Activated CD4-positive, alpha-beta memory T cell treated with anti-CD3 and anti-CD28 coated beads for 36 hours (primary cell): ENCODE measurements at regions of chr14 and their contacts with region 1.

Region 1: DNA sequence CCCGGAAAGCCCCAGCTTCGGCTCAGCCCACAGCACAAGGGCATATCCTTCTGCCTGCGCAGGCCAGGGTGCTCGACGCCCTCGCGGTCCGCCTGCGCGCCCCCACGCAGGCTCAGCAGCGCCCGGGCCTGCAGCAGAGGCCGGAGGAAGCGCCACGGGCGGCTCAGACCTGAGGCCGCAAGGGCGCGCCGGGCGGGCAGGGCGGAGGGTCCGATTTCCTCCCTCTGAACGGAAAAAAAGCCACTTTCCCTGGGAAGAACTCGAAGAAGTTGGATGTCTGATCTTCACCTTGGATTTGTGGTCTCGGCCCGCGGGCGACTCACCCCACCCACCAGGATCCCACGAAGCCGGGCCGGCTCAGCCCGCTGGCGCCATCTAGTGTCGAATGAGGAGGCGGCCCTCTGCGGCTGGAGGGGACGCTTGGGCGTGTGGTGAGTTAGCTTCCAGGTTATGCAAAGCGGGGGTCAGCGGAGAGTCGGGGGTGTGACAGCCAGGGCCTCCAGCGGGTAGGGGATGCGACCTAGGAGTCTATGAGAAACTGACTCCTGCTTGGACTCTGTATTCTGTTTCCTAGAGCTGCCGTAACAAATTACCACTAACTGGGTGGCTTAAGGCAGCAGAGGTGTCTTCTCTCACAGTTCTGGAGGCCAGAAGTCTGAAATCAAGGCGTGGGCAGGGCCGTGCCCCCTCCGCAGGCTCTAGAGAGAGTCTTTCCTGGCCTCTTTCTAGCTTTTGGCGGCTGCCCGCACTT is 40.0 kb upstream of the SRSF5 start:
- DNase-seq: peak; percentile 88
- H3K4me3 Mint-ChIP-seq: peak overlapping the region; percentile 60
- H3K27ac Mint-ChIP-seq: no peak overlapping the region
- H3K4me1 Mint-ChIP-seq: peaks cover 15% of the 10 kb centered on the region
- H3K27me3 Mint-ChIP-seq: no peaks in the 10 kb centered on the region

Region 2: GRCh38 chr14:69460093-69460701 is 266.7 kb before region 1 on chr14:
- CTCF ChIA-PET with region 1: no interaction called
- POLR2A ChIA-PET with region 1: no interaction called
- intact Hi-C with region 1: no loop called
- DNase-seq: peak; percentile 77
- H3K4me3 Mint-ChIP-seq: no peak overlapping the region
- H3K27ac Mint-ChIP-seq: no peak overlapping the region
- H3K4me1 Mint-ChIP-seq: no peaks in the 10 kb centered on the region
- H3K27me3 Mint-ChIP-seq: no peaks in the 10 kb centered on the region

Region 3: DNA sequence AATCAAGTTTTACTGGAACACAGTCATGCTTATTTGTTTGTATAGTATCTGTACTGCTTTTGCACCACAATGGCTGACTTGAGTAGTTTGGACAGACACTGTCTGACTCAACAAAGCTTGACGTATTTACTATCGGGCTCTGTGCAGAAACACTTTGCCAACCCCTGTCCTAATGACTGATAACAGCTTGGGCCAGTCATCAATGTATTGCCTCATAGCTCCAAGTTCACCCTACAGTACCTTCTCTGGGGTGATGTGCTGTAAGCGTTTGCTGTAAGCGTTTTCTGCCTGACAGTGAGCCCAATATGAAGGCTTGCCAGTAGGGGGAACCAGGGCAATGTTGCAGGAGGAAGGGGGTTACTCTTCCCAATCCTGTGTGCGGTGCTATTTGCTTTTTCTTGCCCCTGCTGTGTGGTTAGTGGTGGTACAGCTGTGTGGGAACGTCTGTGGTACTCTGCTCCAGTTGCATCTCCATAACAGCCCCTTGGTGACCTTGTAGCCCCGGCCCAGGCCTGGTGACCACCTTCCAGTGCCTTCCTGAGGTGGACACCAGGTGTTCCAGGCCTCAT is 146.8 kb before region 1 on chr14:
- CTCF ChIA-PET with region 1: interaction called, 97 read pairs
- POLR2A ChIA-PET with region 1: no interaction called
- intact Hi-C with region 1: loop called (anchors 1 kb)
- DNase-seq: peak; percentile 32
- H3K4me3 Mint-ChIP-seq: no peak overlapping the region
- H3K27ac Mint-ChIP-seq: no peak overlapping the region
- H3K4me1 Mint-ChIP-seq: no peaks in the 10 kb centered on the region
- H3K27me3 Mint-ChIP-seq: peaks cover 13% of the 10 kb centered on the region

Region 4: GRCh38 chr14:69715725-69716477 is 11.0 kb before region 1 on chr14:
- CTCF ChIA-PET with region 1: interaction called, 11 read pairs
- POLR2A ChIA-PET with region 1: no interaction called
- intact Hi-C with region 1: no loop called
- DNase-seq: no peak
- H3K4me3 Mint-ChIP-seq: no peak overlapping the region
- H3K27ac Mint-ChIP-seq: peak overlapping the region; percentile 87
- H3K4me1 Mint-ChIP-seq: peaks cover 47% of the 10 kb centered on the region
- H3K27me3 Mint-ChIP-seq: no peaks in the 10 kb centered on the region

Region 5: GRCh38 chr14:69749956-69750355 is 23.0 kb after region 1 on chr14:
- CTCF ChIA-PET with region 1: interaction called, 11 read pairs
- POLR2A ChIA-PET with region 1: no interaction called
- intact Hi-C with region 1: no loop called
- DNase-seq: no peak
- H3K4me3 Mint-ChIP-seq: no peak overlapping the region
- H3K27ac Mint-ChIP-seq: no peak overlapping the region
- H3K4me1 Mint-ChIP-seq: peaks cover 7% of the 10 kb centered on the region
- H3K27me3 Mint-ChIP-seq: no peaks in the 10 kb centered on the region

Region 6: DNA sequence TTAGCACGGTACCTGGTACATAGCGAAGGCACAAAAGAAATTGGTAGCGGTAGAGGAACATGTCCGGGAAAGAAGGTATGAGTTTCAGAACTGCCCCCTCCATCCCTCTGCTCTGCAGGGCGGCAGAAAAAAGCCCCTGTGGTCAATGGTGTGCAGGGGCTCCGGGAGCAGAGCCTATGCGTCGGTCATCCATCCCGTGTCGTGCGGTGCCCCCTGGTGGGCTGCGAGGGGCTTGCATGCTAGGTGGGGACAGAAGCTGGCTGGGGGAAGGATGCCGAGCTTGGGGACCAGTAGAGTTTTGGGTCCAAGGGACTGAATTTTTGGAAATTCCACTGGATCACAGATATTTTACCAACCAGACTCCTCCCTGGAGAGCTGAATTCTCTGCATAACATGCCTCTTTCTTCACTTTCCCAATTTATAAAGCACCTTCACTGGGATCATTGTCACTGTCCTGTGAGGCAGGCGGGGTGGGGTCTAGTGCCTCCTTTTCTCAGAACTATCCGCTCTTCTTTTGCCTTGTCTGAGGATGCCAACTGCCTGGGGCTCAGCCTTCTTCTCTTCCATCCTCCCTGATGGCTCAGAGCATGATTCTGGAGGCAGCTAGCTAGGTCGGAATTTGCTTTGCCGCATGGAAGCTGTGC is 301.0 kb after region 1 on chr14:
- CTCF ChIA-PET with region 1: interaction called, 5 read pairs
- POLR2A ChIA-PET with region 1: no interaction called
- intact Hi-C with region 1: loop called (anchors 5 kb)
- DNase-seq: peak; percentile 77
- H3K4me3 Mint-ChIP-seq: no peak overlapping the region
- H3K27ac Mint-ChIP-seq: no peak overlapping the region
- H3K4me1 Mint-ChIP-seq: no peaks in the 10 kb centered on the region
- H3K27me3 Mint-ChIP-seq: no peaks in the 10 kb centered on the region